OCI-LY7 (cell line): ENCODE measurements at regions of chr2 and their contacts with region 1.

Region 1: GRCh38 chr2:219543601-219544358 is at the starts of genes CHPF and TMEM198:
- DNase-seq: peak; percentile 99
- H3K4me3 ChIP-seq: peak within 1 kb of the TSS; percentile 80
- H3K27ac ChIP-seq: peak within 1 kb of the TSS; percentile 76
- H3K4me1 ChIP-seq: no peaks in the 10 kb centered on the region
- CTCF ChIP-seq: no peak
- total RNA-seq, gene CHPF: 14.5 and 24.1 TPM in 2 replicates
- total RNA-seq, gene TMEM198: 1.4 and 2.5 TPM in 2 replicates

Region 2: GRCh38 chr2:219253753-219254590 is 289.8 kb before region 1 on chr2 and contains the start of gene TUBA4A:
- CTCF ChIA-PET with region 1: no interaction called
- POLR2A ChIA-PET with region 1: no interaction called
- intact Hi-C with region 1: no loop called
- DNase-seq: peak; percentile 93
- H3K4me3 ChIP-seq: peak within 1 kb of the TSS; percentile 87
- H3K27ac ChIP-seq: peak within 1 kb of the TSS; percentile 96
- H3K4me1 ChIP-seq: peaks cover 47% of the 10 kb centered on the region
- CTCF ChIP-seq: no peak
- total RNA-seq, gene TUBA4A: 62.8 and 96.0 TPM in 2 replicates

Region 3: DNA sequence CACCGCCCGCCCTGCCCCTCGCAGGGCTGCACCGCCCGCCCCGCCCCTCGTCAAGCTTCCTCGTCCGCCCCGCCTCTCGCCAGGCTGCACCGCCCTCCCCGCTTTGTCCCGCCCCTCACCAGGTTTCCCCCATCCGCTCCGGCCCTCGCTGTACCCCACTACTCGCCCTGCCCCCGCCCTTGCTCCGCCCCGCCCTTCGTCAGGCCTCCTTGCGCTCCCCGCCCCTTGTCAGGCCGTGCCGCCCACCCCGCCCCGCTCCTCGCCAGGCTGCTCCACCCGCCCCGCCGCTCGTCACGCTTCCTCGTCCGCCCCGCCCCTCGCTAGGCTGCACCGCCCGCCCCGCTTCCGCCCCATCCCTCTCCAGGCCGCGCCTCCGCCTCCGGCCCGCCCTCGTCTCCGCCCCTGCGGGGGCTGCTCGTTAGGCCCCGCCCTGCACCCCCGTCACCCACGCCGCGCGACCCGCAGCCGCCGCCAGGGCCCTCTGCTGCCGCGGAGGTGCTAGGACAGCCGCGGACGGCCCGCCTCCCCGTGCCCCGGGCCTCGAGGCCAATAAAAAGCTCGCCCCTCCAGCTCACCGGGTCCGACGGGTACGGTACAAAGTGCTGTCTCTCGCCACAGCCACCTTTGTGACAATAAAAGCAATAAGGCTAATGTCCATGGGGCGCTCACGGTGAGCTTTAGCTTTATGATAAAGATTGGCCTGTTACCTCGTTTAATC is 155.5 kb before region 1 on chr2:
- CTCF ChIA-PET with region 1: no interaction called
- POLR2A ChIA-PET with region 1: no interaction called
- intact Hi-C with region 1: loop called (anchors 5 kb)
- DNase-seq: peak; percentile 95
- H3K4me3 ChIP-seq: peak overlapping the region; percentile 59
- H3K27ac ChIP-seq: no peak overlapping the region
- H3K4me1 ChIP-seq: peaks cover 15% of the 10 kb centered on the region
- CTCF ChIP-seq: peak; percentile 74

Region 4: DNA sequence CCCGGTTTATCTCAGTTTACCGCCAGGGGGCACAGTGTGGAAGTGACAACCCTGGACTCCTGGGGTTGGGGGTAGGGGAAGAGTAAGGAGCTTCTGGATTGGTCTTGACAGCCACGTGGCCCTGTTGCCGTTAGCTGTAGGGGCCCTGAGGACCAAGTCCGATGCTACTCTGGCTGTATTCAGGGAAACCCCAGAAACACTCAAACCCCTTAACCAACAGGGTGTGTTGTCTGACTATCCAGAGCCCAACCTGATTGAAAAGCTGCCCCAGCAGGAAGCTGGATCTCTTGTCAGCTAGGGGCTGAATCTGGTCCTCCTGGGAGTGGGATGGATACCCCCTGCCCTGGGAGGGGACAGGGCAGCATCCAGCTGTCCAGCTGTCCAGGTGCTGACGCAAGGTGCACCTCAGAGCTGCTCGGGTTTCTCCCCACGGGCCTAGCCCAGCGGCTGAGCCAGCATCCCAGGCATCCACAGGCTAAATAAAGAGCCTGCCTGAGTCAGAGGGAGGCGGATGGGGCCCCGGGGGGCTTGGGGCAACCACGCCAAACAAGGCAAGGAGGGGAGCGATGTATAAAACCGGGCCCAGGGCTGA is 48.2 kb before region 1 on chr2:
- CTCF ChIA-PET with region 1: interaction called, 5 read pairs
- POLR2A ChIA-PET with region 1: interaction called, 4 read pairs
- intact Hi-C with region 1: loop called (anchors 1 kb)
- DNase-seq: peak; percentile 83
- H3K4me3 ChIP-seq: no peak overlapping the region
- H3K27ac ChIP-seq: no peak overlapping the region
- H3K4me1 ChIP-seq: peaks cover 23% of the 10 kb centered on the region
- CTCF ChIP-seq: peak; percentile 83

Region 5: GRCh38 chr2:219597552-219598307 is 54.0 kb after region 1 on chr2 and contains the start of gene STK11IP:
- CTCF ChIA-PET with region 1: no interaction called
- POLR2A ChIA-PET with region 1: interaction called, 14 read pairs
- intact Hi-C with region 1: loop called (anchors 1 kb)
- DNase-seq: peak; percentile 96
- H3K4me3 ChIP-seq: peak within 1 kb of the TSS; percentile 77
- H3K27ac ChIP-seq: peak within 1 kb of the TSS; percentile 56
- H3K4me1 ChIP-seq: peaks cover 14% of the 10 kb centered on the region
- CTCF ChIP-seq: no peak
- total RNA-seq, gene STK11IP: 16.5 and 26.5 TPM in 2 replicates

Region 6: DNA sequence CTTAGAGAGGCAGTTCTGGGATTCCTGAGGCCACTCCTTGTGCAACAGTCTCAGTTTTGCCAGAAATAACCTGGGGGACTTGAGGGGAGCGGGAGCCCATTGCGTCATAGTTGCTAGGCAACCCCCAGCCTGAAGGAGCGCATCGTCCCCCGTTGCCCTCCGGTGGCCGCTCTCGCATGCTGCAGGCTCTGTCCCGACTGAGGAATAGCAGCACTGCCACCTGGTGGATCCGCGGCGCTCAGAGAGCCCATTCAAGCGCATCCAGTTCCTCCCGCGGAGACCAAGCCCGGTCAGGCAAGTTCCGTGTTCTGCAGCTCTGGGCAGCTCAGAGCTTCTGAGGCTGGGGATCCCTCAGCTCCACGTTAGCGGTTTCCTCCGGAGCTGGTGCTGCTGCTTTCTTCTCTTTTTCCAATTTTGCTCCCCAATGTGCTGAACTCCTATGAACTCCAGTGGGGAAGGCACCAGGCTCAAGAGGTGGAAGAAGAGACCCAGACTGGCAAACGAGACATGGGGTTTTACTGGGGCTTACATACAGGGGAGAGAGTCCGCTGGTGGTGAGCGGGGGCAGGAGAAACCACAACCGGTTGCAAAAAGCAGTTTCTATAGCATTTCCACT is 98.8 kb after region 1 on chr2:
- CTCF ChIA-PET with region 1: no interaction called
- POLR2A ChIA-PET with region 1: no interaction called
- intact Hi-C with region 1: loop called (anchors 1 kb)
- DNase-seq: peak; percentile 95
- H3K4me3 ChIP-seq: peak overlapping the region; percentile 30
- H3K27ac ChIP-seq: no peak overlapping the region
- H3K4me1 ChIP-seq: peaks cover 6% of the 10 kb centered on the region
- CTCF ChIP-seq: peak; percentile 97

Region 7: DNA sequence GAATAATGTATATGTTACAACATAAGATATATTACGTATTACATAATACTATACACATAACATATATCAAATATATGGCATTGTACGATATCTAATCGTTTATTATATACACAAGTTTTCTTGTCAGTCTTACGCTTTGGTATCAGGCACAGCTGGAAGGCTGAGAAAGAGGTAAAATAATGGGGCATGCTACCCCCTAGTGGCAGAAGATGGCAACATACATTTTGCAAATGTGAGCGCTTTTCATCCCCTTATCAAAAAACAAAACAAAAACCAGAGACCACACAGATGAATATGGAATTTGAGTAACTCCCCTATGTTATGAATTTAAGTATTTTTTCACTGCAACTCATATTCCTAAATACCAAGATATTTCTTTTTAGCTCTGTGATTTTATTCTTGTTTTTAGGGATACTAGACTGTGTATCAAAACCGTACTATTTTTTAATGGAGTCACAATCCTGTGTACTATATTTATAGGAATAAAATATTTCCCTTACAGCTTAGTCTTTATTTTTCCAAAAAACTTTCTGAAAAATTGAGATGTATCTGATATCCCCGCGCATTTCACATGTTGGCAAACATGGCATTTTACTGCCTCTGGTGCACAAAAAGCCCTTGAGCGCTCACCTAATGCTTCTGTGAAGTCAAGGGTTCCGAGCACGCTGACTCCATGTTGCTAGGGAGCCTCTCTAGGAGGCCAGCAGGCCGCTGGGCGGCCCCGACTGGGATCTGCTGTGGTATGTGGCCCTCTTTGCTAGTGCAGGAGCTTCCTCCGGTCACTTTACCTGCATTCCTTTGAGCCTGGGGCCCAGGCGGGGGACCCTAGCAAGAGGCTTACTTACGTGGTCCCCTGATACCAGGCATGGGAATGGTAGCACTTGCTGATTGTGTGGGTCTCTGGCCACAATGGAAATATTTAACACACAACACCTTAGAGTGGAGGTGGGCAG is 146.2 kb after region 1 on chr2:
- CTCF ChIA-PET with region 1: no interaction called
- POLR2A ChIA-PET with region 1: no interaction called
- intact Hi-C with region 1: loop called (anchors 1 kb)
- DNase-seq: peak; percentile 66
- H3K4me3 ChIP-seq: no peak overlapping the region
- H3K27ac ChIP-seq: no peak overlapping the region
- H3K4me1 ChIP-seq: peaks cover 5% of the 10 kb centered on the region
- CTCF ChIP-seq: peak; percentile 79